ENCODE measurements at regions of chr5 and their contacts with region 1.

Region 1: GRCh38 chr5:131533836-131534235 is 101.2 kb downstream of the RAPGEF6 start:
- DNase-seq: no peak
- ATAC-seq: no peak
- H3K4me3 Mint-ChIP-seq: no peak overlapping the region
- H3K27ac Mint-ChIP-seq: no peak overlapping the region
- H3K4me1 Mint-ChIP-seq: peaks cover 73% of the 10 kb centered on the region
- H3K27me3 Mint-ChIP-seq: no peaks in the 10 kb centered on the region

Region 2: GRCh38 chr5:131521252-131521651 is 12.6 kb before region 1 on chr5:
- CTCF ChIA-PET with region 1: interaction called, 10 read pairs
- POLR2A ChIA-PET with region 1: no interaction called
- DNase-seq: no peak
- ATAC-seq: no peak
- H3K4me3 Mint-ChIP-seq: no peak overlapping the region
- H3K27ac Mint-ChIP-seq: no peak overlapping the region
- H3K4me1 Mint-ChIP-seq: peaks cover 19% of the 10 kb centered on the region
- H3K27me3 Mint-ChIP-seq: no peaks in the 10 kb centered on the region

Region 3: DNA sequence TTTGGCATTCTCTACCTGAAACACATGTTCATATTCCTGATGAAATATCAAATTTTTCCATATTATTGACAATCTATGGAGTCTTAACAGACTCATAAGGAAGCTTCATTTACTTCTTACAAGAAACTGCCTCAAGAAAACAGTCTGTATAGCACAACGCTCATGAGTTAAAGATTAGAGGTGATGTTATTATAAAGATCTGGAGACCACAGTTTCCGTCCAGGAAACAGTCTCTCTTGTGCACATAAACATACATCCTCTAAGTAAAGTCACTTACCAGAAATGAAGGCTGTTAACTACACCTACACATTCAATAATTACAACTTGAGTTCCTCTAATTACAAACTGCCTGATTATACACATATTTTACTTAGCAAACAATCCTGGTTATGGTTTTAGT is 14.3 kb after region 1 on chr5:
- CTCF ChIA-PET with region 1: interaction called, 32 read pairs
- POLR2A ChIA-PET with region 1: interaction called, 12 read pairs
- DNase-seq: peak; percentile 52
- ATAC-seq: peak; percentile 98
- H3K4me3 Mint-ChIP-seq: peak overlapping the region; percentile 82
- H3K27ac Mint-ChIP-seq: peak overlapping the region; percentile 90
- H3K4me1 Mint-ChIP-seq: peaks cover 51% of the 10 kb centered on the region
- H3K27me3 Mint-ChIP-seq: no peaks in the 10 kb centered on the region

Measured in activated CD8-positive, alpha-beta T cell treated with anti-CD3 and anti-CD28 coated beads, Interleukin-2, amount 10 ng/mL, durations not matched to agents 7 days and 5 days (primary cell).